ENCODE measurements at regions of chr17 and their contacts with region 1.

Region 1: DNA sequence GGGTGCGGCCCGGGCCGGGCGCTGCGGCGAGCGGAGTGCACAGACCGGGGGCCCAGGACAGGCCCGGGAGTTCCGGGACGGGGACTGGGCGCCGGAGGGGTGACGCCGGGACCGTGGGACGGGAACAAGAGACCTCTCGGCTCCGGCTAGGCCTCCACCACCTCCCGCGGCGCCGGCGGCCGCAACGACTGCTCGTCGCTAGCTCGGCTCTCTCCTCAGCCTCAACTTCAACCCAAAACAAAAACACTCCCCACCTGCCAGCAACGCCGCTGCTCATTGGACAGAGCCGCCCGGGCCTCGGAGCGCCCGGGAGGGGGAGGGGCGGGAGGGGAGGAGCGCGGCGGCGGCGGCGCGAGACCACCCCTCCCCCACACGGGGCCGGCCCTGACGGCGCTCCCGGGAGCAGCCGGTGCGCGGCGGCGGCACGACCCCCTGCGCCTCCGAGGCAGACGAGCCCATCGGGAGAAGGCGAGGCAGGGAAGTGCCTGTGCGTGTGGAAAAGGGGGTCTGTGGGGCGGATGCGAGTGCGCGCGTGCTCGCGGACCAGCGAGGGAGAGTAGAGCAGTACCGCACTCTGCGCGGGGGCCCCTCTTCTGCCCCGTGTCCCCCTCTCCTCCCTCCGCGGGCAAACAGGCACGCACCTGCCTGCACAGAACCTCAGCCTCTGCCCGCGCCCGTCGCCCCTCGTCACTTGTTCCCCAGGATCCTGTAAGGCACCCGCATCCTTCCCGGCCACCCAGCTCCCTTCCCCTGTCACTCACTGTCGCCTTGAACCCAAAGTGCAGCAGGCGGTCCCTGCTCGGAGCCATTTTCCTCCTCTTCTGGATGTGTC is at the start of gene FBXL20:
- DNase-seq: peak; percentile 84 to 96
- H3K4me3 ChIP-seq: peak within 1 kb of the TSS; percentile 96 to 97
- H3K27ac ChIP-seq: peak within 1 kb of the TSS; percentile 89 to 96
- H3K4me1 ChIP-seq: peaks cover 0 to 14% of the 10 kb centered on the region in 2 donors
- H3K27me3 ChIP-seq: no peaks in the 10 kb centered on the region
- CTCF ChIP-seq: peak in 1 of 3 experiments; percentile 5
- total RNA-seq, gene FBXL20: 27.1 TPM

Region 2: GRCh38 chr17:39199820-39200069 is 201.9 kb before region 1 on chr17:
- intact Hi-C with region 1: loop called (anchors 5 kb)
- DNase-seq: peak; percentile 56 to 96
- H3K4me3 ChIP-seq: peak overlapping the region; percentile 83 to 89
- H3K27ac ChIP-seq: peak overlapping the region; percentile 92 to 98
- H3K4me1 ChIP-seq: peaks cover 28 to 46% of the 10 kb centered on the region in 2 donors
- H3K27me3 ChIP-seq: no peaks in the 10 kb centered on the region
- CTCF ChIP-seq: no peak

Region 3: GRCh38 chr17:39281806-39282205 is 119.8 kb before region 1 on chr17:
- intact Hi-C with region 1: loop called (anchors 5 kb)
- DNase-seq: no peak
- H3K4me3 ChIP-seq: no peak overlapping the region
- H3K27ac ChIP-seq: peak overlapping the region in 1 of 2 donors; percentile 60
- H3K4me1 ChIP-seq: peaks cover 0 to 7% of the 10 kb centered on the region in 2 donors
- H3K27me3 ChIP-seq: no peaks in the 10 kb centered on the region
- CTCF ChIP-seq: no peak

Region 4: GRCh38 chr17:39365242-39365641 is 36.4 kb before region 1 on chr17:
- intact Hi-C with region 1: loop called (anchors 5 kb)
- DNase-seq: no peak
- H3K4me3 ChIP-seq: peak overlapping the region in 1 of 2 donors; percentile 42
- H3K27ac ChIP-seq: peak overlapping the region; percentile 69 to 77
- H3K4me1 ChIP-seq: peaks cover 7 to 12% of the 10 kb centered on the region in 2 donors
- H3K27me3 ChIP-seq: no peaks in the 10 kb centered on the region
- CTCF ChIP-seq: no peak

Region 5: GRCh38 chr17:39450847-39451581 is 49.4 kb after region 1 on chr17 and contains the start of gene MED1:
- intact Hi-C with region 1: loop called (anchors 2 kb)
- DNase-seq: peak; percentile 84 to 97
- H3K4me3 ChIP-seq: peak within 1 kb of the TSS; percentile 51 to 93
- H3K27ac ChIP-seq: peak within 1 kb of the TSS; percentile 57 to 83
- H3K4me1 ChIP-seq: peaks cover 0 to 2% of the 10 kb centered on the region in 2 donors
- H3K27me3 ChIP-seq: no peaks in the 10 kb centered on the region
- CTCF ChIP-seq: no peak
- total RNA-seq, gene MED1: 11.8 TPM

Region 6: GRCh38 chr17:39461113-39461925 is 59.7 kb after region 1 on chr17 and contains the start of gene CDK12:
- intact Hi-C with region 1: loop called (anchors 5 kb)
- DNase-seq: peak; percentile 93 to 98
- H3K4me3 ChIP-seq: peak within 1 kb of the TSS; percentile 68 to 81
- H3K27ac ChIP-seq: peak within 1 kb of the TSS; percentile 96
- H3K4me1 ChIP-seq: peaks cover 7 to 26% of the 10 kb centered on the region in 2 donors
- H3K27me3 ChIP-seq: no peaks in the 10 kb centered on the region
- CTCF ChIP-seq: no peak
- total RNA-seq, gene CDK12: 25.2 TPM

Region 7: GRCh38 chr17:39527220-39527813 is 125.7 kb after region 1 on chr17:
- intact Hi-C with region 1: no loop called
- DNase-seq: no peak
- H3K4me3 ChIP-seq: no peak overlapping the region
- H3K27ac ChIP-seq: no peak overlapping the region
- H3K4me1 ChIP-seq: no peaks in the 10 kb centered on the region
- H3K27me3 ChIP-seq: no peaks in the 10 kb centered on the region
- CTCF ChIP-seq: peak in 1 of 3 experiments; percentile 25

Measured in ascending aorta (tissue), 2 donors.